Panc1 (cell line): ENCODE measurements at regions of chr18 and their contacts with region 1.

Region 1: DNA sequence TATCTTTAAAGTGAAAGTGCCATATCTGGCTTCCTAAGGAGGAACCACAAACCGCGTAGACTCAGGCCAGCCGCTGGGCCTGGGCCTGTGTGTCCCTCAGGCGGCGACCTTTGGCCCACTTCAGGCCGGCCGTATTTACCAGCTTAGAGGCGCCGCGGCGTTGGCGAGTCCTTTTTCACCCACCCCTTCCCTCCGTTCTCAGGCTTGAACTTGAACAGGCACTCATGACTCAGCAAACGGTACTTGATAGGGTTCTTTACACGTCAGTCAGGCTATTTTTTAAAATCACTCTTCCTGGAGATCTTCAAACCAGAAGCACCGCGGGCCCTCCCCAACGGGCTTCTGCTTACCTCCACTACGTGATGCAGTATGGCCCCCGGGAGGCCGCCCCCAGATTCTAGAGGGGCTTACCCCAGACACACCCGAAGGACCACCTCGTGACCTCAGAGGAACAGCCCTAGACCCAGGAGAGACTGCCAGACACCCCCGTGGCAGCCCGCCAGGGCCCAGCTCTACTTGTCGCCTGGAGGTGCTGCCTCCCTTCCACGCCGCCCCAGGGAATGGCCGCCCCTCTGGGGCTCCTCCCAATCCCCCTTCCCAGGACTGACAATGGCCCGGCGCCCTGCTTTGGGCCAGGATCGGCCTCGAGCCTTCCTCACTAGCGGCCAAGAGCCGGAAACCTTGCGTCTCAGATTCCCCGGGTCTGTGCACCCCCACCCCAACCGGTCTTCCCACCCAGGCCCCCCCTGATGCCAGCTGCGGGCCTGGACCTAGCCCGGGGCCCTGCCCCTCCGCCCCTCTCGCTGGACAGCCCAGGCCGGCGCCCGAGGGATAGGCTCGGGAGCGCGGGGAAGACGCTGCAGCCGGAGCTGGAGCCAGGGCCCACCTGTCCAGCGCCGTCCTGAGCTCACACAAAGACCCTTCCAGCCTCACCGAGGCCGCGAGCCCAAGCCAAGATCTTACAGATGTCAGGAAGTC is 33.8 kb upstream of the IMPA2 start:
- DNase-seq: no peak
- ATAC-seq: peak; percentile 93
- H3K4me3 ChIP-seq: peak overlapping the region; percentile 39 to 65
- H3K27ac ChIP-seq: peak overlapping the region; percentile 81
- H3K4me1 ChIP-seq: peaks cover 22% of the 10 kb centered on the region
- H3K27me3 ChIP-seq: no peaks in the 10 kb centered on the region
- CTCF ChIP-seq: no peak

Region 2: DNA sequence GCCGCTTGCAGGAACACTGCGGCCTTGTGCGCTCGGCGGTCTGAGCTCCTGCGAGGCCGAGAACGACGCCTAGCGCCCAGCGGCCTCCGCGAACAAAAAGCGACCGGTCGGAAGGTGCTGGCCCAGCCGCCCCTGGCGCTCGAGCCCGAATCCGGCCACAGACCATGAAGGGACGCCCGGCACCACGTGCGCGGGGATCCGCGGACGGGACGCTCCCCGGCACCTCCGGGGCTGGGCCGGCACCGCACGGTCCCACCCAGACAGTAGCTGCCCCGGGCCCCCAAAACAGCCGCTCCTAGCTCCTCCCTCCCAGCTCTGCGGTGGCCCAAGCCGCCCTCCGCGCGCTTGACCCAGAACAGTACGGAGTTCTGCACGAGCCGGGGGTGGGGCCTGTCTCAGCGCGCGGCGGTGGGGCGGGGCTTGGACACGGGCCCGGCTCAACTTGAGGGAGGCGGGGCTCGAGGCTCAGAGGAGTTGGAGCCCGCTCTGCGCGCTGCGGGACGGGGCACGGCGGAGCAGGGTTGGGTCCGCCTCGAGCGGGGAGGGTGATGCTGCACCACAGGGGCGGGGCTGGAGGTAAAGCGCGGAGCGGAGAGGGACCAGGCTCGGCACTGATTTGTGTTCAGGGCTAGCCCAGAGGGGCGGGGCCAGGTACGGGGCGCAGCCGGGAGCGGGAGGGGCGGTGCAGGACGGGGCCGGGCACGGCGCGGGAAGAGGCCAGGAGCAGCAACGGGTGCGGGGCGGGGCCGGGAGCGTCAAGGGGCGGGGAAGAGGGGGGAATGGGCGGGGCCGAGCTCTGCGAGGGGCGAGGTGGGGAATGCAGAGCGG is 33.3 kb after region 1 on chr18:
- CTCF ChIA-PET with region 1: no interaction called
- POLR2A ChIA-PET with region 1: interaction called, 6 read pairs
- in situ Hi-C with region 1: no loop called
- intact Hi-C with region 1: loop called (anchors 1 kb)
- DNase-seq: peak; percentile 82
- ATAC-seq: peak; percentile 95
- H3K4me3 ChIP-seq: peak overlapping the region; percentile 55 to 57
- H3K27ac ChIP-seq: peak overlapping the region; percentile 95
- H3K4me1 ChIP-seq: peaks cover 15% of the 10 kb centered on the region
- H3K27me3 ChIP-seq: no peaks in the 10 kb centered on the region
- CTCF ChIP-seq: no peak

Region 3: DNA sequence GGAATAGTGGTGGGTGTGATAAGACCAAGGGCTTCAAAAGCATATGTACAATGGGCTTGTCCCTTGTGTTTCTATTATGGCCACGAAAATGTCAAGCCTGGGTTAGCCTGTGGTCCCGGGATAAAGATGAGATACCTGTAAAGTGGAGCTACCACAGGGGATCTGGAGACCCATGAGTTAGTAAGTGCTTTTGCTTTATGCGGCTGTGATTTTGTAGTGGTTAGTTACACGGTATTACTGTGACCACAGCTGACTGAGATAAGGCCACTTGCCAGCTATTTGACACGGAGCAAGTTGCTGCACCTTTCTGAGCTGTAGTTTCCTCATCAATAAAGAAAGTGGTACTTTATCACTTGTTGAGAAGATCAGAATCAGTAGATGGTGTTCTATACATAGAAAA is 559.5 kb after region 1 on chr18:
- CTCF ChIA-PET with region 1: no interaction called
- POLR2A ChIA-PET with region 1: no interaction called
- in situ Hi-C with region 1: no loop called
- intact Hi-C with region 1: no loop called
- DNase-seq: no peak
- ATAC-seq: no peak
- H3K4me3 ChIP-seq: no peak overlapping the region
- H3K27ac ChIP-seq: no peak overlapping the region
- H3K4me1 ChIP-seq: no peaks in the 10 kb centered on the region
- H3K27me3 ChIP-seq: no peaks in the 10 kb centered on the region
- CTCF ChIP-seq: no peak